Right ventricle myocardium superior (tissue), 1 donor: ENCODE measurements at regions of chr2 and their contacts with region 1.

Region 1: GRCh38 chr2:222792001-222792611 is 68.7 kb upstream of the ACSL3 start:
- DNase-seq: peak; percentile 80
- ATAC-seq: peak; percentile 88

Region 2: DNA sequence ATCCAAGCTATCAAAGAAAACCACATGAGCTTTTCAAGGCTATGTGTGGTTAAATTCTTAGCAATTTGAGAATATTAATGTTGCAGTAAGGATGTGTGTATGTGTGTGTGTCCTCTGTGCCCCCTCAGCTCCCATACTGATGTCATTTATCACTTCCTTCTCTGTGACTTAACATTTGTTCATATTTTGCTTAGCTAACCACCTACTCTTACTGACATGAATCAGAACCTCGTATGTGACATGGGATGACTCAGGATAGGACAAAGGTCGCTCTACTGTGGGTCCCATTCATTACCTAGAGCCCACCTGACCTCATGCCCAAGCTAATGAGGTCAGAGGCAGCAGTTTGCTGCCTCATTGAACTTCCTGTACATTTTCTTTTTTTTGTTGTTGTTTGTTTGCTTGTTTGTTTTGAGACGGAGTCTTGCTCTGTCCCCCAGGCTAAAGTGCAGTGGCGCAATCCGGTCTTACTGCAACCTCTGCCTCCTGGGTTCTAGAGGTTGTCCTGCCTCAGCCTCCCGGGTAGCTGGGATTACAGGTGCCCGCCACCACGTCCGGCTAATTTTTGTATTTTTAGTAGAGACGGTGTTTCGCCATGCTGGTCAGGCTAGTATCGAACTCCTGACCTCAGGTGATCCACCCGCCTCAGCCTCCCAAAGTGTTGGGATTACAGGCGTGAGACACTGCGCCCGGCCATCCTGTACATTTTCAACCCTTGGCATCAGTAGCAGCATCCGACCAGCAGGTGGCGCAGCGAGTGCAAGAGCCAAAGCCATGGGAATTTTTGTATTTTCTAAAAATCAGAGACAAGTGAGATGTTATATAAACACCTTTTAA is 84.2 kb before region 1 on chr2:
- intact Hi-C with region 1: loop called (anchors 5 kb)
- DNase-seq: peak; percentile 92
- ATAC-seq: peak; percentile 82